AG04450 (cell line): ENCODE measurements at regions of chr6 and their contacts with region 1.

Region 1: GRCh38 chr6:85593438-85594196 is at the start of gene SNX14:
- DNase-seq: peak; percentile 88
- H3K4me3 ChIP-seq: peak within 1 kb of the TSS; percentile 91
- H3K27ac ChIP-seq: peak within 1 kb of the TSS; percentile 90
- H3K27me3 ChIP-seq: no peaks in the 10 kb centered on the region
- CTCF ChIP-seq: no peak
- polyA plus RNA-seq, gene SNX14: 77.0 and 114 TPM in 2 replicates

Region 2: DNA sequence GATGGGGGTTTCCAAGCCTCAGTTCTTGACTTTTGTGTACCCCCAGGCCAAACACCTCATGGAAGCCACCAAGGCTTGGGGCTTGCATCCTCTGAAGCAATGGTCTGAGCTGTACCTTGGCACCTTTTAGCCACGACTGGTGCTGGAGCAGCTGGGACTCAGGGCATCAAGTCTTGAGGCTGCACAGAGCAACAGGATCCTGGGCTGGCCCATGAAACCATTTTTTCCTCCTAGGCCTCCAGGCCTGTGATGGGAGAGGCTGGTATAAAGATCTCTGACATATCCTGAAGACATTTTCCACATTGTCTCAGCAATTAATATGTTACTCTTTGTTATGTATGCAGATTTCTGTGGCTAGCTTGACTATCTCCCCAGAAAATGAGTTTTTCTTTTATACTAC is 560.1 kb before region 1 on chr6:
- CTCF ChIA-PET with region 1: no interaction called
- POLR2A ChIA-PET with region 1: no interaction called
- DNase-seq: no peak
- H3K4me3 ChIP-seq: no peak overlapping the region
- H3K27ac ChIP-seq: no peak overlapping the region
- H3K27me3 ChIP-seq: no peaks in the 10 kb centered on the region
- CTCF ChIP-seq: no peak

Region 3: DNA sequence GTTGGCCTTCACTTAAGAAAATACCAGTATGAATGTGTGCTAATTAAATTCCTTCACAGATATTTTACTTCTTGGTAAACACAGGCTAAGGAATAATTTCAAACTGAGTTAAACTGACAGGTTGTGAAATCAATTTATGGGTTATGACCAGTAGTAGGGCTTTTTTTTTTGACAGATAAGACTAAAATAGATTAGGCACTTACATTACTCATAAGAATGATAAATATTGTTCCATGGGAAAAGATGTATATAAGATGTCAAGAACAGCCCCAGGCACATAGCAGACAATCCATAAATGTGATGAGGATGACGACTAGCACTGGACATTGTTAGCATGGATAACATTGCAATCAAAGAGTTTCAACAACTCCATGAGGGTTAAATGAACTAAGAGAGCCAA is 120.9 kb before region 1 on chr6:
- CTCF ChIA-PET with region 1: no interaction called
- POLR2A ChIA-PET with region 1: no interaction called
- DNase-seq: no peak
- H3K4me3 ChIP-seq: no peak overlapping the region
- H3K27ac ChIP-seq: no peak overlapping the region
- H3K27me3 ChIP-seq: no peaks in the 10 kb centered on the region
- CTCF ChIP-seq: no peak

Region 4: GRCh38 chr6:85620308-85620707 is 26.7 kb after region 1 on chr6:
- CTCF ChIA-PET with region 1: interaction called, 11 read pairs
- POLR2A ChIA-PET with region 1: no interaction called
- DNase-seq: no peak
- H3K4me3 ChIP-seq: no peak overlapping the region
- H3K27ac ChIP-seq: no peak overlapping the region
- H3K27me3 ChIP-seq: no peaks in the 10 kb centered on the region
- CTCF ChIP-seq: no peak